GM23248 (cell line): ENCODE measurements at regions of chr1 and their contacts with region 1.

Region 1: GRCh38 chr1:203861379-203862184 is at the start of gene SNRPE:
- DNase-seq: peak; percentile 99
- H3K4me3 ChIP-seq: peak within 1 kb of the TSS; percentile 91
- H3K27ac ChIP-seq: peak within 1 kb of the TSS; percentile 60
- H3K4me1 ChIP-seq: peaks cover 42% of the 10 kb centered on the region
- H3K27me3 ChIP-seq: no peaks in the 10 kb centered on the region
- total RNA-seq, gene SNRPE: 27.6 and 47.3 TPM in 2 replicates

Region 2: DNA sequence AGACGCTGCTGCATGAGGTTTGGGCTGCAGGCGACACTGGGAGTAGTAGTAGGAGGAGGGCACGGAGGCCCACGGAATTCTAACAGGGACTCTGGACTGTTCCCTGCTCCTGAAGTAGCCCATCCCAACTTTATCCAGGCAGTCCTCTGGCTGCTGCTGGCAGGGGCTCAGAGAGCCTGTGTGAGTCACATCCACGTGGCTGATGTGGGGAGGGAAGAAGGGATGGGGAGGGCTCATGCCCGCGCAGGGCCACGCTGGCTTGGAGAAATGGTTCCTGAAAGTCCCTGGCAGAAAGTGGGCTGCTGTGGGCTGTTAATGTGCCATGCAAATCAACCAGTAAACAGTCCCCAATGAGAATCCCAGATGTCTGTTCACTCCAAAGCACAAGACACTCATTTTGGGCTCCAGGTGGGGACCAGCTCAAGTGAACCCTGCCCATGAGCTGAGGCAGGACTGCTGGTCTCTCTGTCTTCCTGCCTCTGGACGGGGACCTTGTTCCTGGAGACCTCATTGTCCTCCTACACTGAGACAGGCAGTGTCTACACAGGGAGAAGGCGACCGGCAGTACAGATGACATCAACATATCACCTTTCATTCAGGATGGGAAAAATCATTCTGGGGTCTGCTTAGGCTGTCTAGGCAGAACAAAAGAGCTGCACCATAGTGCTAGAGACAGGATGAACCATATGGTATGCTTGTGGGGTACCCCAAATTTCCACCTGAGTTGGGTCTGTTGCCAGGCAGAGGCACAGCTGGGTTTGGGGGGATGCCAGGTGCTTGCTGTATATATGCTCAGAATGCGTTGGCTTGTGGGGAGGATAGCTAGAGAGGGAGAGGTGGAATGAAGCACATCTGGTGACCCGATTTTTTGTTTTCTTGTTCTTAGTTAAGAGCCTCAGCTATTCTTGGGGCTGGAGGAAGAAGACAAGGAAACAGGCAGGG is 452.8 kb before region 1 on chr1:
- in situ Hi-C with region 1: no loop called
- DNase-seq: peak; percentile 88
- H3K4me3 ChIP-seq: no peak overlapping the region
- H3K27ac ChIP-seq: no peak overlapping the region
- H3K4me1 ChIP-seq: peaks cover 19% of the 10 kb centered on the region
- H3K27me3 ChIP-seq: no peaks in the 10 kb centered on the region

Region 3: DNA sequence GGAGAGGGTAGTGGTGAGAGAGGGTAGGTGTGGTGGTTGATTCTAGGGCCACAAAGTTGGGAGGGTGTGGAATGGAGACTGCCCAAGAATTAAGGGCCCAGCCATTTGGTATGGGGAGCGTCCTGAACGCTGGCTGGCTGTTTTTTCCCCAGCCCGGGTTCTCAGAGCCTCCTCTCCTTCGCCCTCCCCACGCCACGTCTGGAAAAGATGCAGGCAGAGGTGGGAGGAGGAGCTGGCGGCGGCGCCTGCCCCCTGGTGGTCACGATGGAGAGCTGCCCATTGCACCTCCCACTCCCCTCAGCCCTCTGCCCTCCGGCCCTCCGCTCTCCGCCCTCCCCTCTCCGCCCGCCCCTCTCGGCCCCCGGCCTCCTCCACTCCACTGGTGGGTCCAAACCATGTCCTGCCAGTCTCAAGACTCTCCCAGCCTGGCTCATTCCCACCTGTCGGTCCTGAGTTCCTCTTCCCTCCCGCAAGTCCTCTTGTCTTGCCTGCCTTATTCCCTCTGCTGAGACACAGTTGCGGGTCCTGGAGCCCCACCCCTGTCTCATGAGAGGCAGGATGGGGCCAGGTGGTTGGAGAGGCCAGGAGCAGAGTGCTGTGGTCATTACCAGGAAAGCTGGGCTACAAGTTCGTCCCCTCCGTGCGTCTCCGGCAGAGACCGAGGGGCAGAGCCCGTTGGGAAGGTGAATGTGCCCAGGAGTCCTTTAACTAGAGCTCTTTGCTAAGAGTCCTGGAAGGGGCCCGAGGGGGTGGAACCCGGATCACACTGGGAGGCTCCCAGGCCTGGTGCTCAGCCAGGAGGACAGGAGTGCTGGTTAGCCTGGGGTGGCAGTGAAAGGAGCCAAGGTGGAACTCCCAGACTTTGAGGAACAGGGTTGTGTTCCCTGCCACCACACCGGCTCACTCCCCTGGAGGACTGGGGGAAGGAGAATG is 267.6 kb after region 1 on chr1:
- in situ Hi-C with region 1: loop called (anchors 5 kb)
- DNase-seq: peak; percentile 87
- H3K4me3 ChIP-seq: no peak overlapping the region
- H3K27ac ChIP-seq: peak overlapping the region; percentile 6; the same call in 1 of the 2 replicates
- H3K4me1 ChIP-seq: peaks cover 34% of the 10 kb centered on the region
- H3K27me3 ChIP-seq: no peaks in the 10 kb centered on the region

Region 4: DNA sequence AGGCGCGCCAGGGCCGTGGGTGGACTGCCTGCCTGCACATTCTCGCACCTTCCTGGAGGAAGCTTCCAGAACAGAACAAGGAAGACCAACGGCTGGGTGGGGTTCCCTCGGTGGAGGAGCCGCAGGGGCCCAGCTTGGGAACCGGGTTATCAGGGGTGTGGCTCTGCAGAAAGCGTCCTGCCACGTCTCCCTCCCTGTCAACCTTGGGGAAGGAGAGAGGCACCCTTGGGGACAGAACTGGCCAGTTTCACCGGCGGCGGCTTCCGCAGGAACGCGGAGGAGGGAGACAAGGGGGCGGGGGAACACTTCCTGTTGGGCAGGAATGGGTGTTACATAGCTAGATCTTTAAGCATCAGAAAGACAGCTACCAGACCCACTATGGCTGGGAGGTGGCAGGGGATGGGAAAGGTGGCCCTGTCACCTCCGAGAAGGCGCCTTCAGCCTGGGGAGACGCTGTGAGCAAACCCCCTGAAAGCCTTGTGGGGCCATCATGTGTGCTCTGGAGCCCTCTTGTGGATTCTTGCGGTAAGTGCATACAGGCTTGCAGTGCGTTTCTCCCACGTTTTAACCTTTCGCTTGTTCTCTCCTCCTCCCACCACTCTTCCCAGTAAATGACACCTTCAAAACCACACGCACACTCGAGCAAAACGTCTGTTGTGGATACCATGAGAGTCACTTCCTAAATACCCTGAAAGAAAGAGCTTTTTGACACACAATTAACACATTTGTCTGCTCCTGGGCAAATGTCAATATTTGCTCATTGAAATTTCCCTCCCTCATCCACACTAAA is 501.9 kb after region 1 on chr1:
- in situ Hi-C with region 1: loop called (anchors 10 kb)
- DNase-seq: peak; percentile 82
- H3K4me3 ChIP-seq: peak overlapping the region; percentile 69
- H3K27ac ChIP-seq: no peak overlapping the region
- H3K4me1 ChIP-seq: peaks cover 4% of the 10 kb centered on the region; the same call in 1 of the 2 replicates
- H3K27me3 ChIP-seq: no peaks in the 10 kb centered on the region